PC-3 (cell line): ENCODE measurements at regions of chr14 and their contacts with region 1.

Region 1: DNA sequence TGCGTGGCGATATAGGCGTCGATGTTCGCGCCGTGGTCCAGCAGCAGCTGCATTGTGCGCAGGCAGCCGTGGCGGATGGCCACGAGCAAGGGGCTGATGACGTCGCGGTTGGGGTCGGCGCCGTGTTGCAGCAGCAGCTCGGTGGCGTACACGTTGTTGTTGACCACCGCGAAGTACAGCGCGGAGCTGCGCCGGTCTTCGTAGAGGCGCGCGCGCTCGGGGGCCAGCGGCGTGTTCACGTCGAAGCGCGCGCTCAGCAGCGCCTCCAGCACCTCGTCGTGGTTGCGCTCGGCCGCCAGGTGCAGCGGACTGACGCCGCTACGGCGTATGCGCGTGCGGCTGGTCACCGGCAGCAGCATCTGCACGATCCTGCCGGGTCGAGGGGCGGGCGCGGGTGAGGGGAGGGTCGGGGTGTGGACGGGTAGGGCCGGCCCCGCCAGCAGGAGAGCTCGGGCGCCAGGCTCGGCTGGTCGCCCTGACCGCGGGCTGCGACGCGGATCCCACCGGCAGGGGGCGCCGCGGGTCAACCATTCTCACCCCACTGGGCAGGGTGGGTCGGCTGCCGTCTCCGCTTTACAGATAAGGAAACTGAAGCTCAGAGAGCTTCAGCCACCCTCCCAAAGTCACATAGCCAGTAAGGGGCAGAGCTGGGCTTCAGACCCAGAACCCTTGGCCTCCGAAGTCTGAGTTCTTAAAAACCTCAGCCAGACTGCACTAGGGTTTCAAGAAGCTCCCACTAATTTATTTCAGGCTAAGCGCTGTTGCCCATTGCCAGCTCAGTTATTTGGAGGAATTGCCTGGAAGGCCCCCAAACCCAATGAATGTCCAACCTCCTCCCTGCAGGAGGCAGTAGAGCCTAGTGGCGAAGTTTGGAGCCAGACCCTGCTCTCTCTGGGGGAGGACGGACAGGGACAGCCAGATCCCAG is 12.4 kb downstream of the FAM181A start:
- DNase-seq: peak; percentile 67
- ATAC-seq: peak; percentile 84
- H3K4me3 ChIP-seq: peak overlapping the region; percentile 42; the same call in 1 of the 2 replicates
- H3K27ac ChIP-seq: no peak overlapping the region
- H3K4me1 ChIP-seq: peaks cover 26% of the 10 kb centered on the region
- H3K27me3 ChIP-seq: no peaks in the 10 kb centered on the region
- CTCF ChIP-seq: peak; percentile 78

Region 2: GRCh38 chr14:93734086-93734822 is 205.3 kb before region 1 on chr14:
- CTCF ChIA-PET with region 1: no interaction called
- POLR2A ChIA-PET with region 1: no interaction called
- intact Hi-C with region 1: no loop called
- DNase-seq: no peak
- ATAC-seq: no peak
- H3K4me3 ChIP-seq: no peak overlapping the region
- H3K27ac ChIP-seq: no peak overlapping the region
- H3K4me1 ChIP-seq: no peaks in the 10 kb centered on the region
- H3K27me3 ChIP-seq: peaks cover 39% of the 10 kb centered on the region
- CTCF ChIP-seq: no peak

Region 3: GRCh38 chr14:93804646-93805045 is 134.9 kb before region 1 on chr14:
- CTCF ChIA-PET with region 1: no interaction called
- POLR2A ChIA-PET with region 1: no interaction called
- intact Hi-C with region 1: no loop called
- DNase-seq: no peak
- ATAC-seq: no peak
- H3K4me3 ChIP-seq: no peak overlapping the region
- H3K27ac ChIP-seq: no peak overlapping the region
- H3K4me1 ChIP-seq: no peaks in the 10 kb centered on the region
- H3K27me3 ChIP-seq: no peaks in the 10 kb centered on the region
- CTCF ChIP-seq: peak; percentile 21; the same call in 1 of the 2 replicates

Region 4: GRCh38 chr14:93970549-93970946 is 31.0 kb after region 1 on chr14:
- CTCF ChIA-PET with region 1: interaction called, 15 read pairs
- POLR2A ChIA-PET with region 1: no interaction called
- intact Hi-C with region 1: loop called (anchors 1 kb)
- DNase-seq: peak; percentile 46
- ATAC-seq: peak; percentile 92
- H3K4me3 ChIP-seq: peak overlapping the region; percentile 41; the same call in 1 of the 2 replicates
- H3K27ac ChIP-seq: no peak overlapping the region
- H3K4me1 ChIP-seq: peaks cover 3% of the 10 kb centered on the region; the same call in 1 of the 2 replicates
- H3K27me3 ChIP-seq: no peaks in the 10 kb centered on the region
- CTCF ChIP-seq: peak; percentile 69

Region 5: DNA sequence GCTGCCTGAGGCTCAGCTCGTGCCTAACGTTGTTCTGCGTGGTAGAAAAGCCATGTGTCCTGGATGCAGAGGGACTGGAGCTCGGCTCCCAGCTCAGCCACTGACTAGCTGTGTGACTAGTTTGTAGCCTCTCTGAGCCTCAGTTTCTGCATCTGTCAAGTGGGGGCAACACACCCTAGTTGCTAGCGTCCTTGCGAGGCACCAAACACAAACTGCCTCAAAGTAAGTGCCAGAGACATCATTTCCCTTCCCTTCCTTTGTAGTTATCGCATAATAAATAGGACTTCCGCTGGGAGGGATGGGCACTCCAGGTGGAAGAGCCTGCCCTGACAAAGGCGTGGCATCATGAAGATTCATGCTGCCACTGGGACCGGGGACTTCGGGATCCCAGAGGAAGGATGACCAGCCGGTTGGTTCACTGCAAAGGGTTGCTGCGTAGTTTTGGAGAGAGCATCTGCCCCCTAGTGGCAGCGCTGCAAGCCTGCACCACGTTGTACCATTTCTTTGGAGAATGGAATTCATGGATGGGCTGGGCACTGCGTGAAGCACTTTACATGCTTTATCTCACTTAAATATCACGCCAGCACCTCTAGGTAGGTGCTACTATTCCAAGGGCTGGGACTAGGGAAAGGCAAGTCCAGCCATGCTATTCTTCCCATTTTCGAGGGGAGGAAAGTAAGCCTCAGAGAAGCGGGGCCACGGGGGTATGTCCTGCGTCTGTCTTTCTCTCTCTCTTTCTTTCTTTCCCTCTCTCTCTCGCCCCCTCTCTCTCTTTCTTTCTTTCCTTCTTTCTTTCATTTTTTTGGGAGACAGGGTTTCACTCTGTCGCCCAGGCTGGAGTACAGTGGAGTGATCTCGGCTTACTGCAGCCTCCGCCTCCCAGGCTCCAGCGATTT is 62.2 kb after region 1 on chr14:
- CTCF ChIA-PET with region 1: interaction called, 5 read pairs
- POLR2A ChIA-PET with region 1: no interaction called
- intact Hi-C with region 1: loop called (anchors 1 kb)
- DNase-seq: peak; percentile 83
- ATAC-seq: peak; percentile 90
- H3K4me3 ChIP-seq: no peak overlapping the region
- H3K27ac ChIP-seq: no peak overlapping the region
- H3K4me1 ChIP-seq: peaks cover 5% of the 10 kb centered on the region; the same call in 1 of the 2 replicates
- H3K27me3 ChIP-seq: no peaks in the 10 kb centered on the region
- CTCF ChIP-seq: peak; percentile 94